Activated CD4-positive, alpha-beta memory T cell treated with anti-CD3 and anti-CD28 coated beads for 36 hours (primary cell): ENCODE measurements at regions of chr5 and their contacts with region 1.

Region 1: GRCh38 chr5:134070725-134071613 is 43.5 kb upstream of the TCF7 start:
- DNase-seq: peak; percentile 58
- H3K4me3 Mint-ChIP-seq: peak overlapping the region; percentile 77
- H3K27ac Mint-ChIP-seq: peak overlapping the region; percentile 92
- H3K4me1 Mint-ChIP-seq: peaks cover 63% of the 10 kb centered on the region
- H3K27me3 Mint-ChIP-seq: no peaks in the 10 kb centered on the region

Region 2: GRCh38 chr5:134053840-134054338 is 17.1 kb before region 1 on chr5:
- CTCF ChIA-PET with region 1: no interaction called
- POLR2A ChIA-PET with region 1: no interaction called
- intact Hi-C with region 1: loop called (anchors 1 kb)
- DNase-seq: no peak
- H3K4me3 Mint-ChIP-seq: no peak overlapping the region
- H3K27ac Mint-ChIP-seq: peak overlapping the region; percentile 74
- H3K4me1 Mint-ChIP-seq: peaks cover 29% of the 10 kb centered on the region
- H3K27me3 Mint-ChIP-seq: no peaks in the 10 kb centered on the region

Region 3: DNA sequence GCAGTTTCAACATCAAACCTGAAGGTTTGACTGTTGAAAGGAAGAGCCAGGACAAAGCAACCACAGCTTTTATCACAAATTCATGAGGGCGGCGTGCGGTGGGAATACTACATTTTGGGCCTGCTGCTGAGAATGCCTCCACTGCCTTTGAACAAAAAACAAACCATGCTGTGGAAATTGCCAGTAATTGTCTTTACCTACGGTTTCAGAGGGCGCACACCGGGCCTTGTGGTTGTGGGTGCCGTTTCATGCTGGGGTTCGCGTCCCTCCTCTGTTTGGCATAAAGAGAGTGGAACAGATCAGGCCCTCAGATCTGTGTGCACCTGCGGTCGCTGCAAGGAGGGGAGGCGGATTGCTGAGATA is 16.0 kb after region 1 on chr5:
- CTCF ChIA-PET with region 1: interaction called, 3 read pairs
- POLR2A ChIA-PET with region 1: interaction called, 6 read pairs
- intact Hi-C with region 1: loop called (anchors 1 kb)
- DNase-seq: peak; percentile 88
- H3K4me3 Mint-ChIP-seq: peak overlapping the region; percentile 10
- H3K27ac Mint-ChIP-seq: peak overlapping the region; percentile 80
- H3K4me1 Mint-ChIP-seq: peaks cover 75% of the 10 kb centered on the region
- H3K27me3 Mint-ChIP-seq: peaks cover 2% of the 10 kb centered on the region